ENCODE measurements at regions of chr5 and their contacts with region 1.

Region 1: GRCh38 chr5:171207256-171207847 is 101.7 kb upstream of the TLX3 start:
- DNase-seq: peak; percentile 57
- ATAC-seq: peak; percentile 79
- H3K4me3 ChIP-seq: no peak overlapping the region
- H3K27ac ChIP-seq: no peak overlapping the region
- H3K4me1 ChIP-seq: no peaks in the 10 kb centered on the region
- H3K27me3 ChIP-seq: no peaks in the 10 kb centered on the region
- CTCF ChIP-seq: peak; percentile 64
- POLR2A ChIP-seq: no peak
- RAD21 ChIP-seq: peak; percentile 65

Region 2: DNA sequence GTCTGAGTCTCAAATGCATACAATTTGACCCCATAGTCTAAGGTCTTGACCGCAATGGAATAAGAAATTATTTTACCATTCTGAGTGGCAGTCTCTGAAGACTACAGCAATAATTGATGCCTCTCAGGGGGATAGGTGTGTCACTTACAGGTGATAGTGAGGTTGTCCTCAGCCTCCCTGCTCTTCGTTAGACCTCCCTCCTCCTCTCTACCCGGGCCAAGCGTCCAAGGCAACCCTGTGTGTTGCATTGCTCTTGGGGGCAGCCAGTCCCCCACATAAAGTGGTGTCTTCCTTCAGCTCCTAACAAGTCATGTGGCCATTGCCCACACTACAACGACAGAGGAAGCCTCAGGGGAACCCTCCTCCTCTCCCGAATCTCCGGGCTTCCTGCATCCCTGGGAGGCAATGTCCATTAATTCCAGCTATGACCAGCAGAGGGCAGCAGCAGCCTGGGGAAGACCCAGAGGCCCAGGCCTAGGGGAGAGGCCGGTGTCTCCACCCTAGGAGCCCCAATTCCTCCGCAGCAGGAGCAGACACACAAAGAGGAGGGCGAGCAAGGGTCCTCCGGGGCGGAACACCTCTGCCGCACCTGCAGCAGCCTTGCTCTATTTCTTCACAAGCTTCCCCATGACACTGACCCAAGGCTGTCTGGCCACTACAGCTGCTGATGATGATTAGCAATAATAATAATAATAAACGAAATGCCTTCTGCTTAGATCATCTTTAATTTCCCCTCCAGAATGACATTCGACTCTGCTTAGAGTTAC is 568.7 kb before region 1 on chr5:
- CTCF ChIA-PET with region 1: no interaction called
- POLR2A ChIA-PET with region 1: no interaction called
- dilution Hi-C with region 1: no loop called
- in situ Hi-C with region 1: no loop called
- intact Hi-C with region 1: loop called (anchors 10 kb)
- DNase-seq: peak; percentile 28
- ATAC-seq: peak; percentile 95
- H3K4me3 ChIP-seq: no peak overlapping the region
- H3K27ac ChIP-seq: no peak overlapping the region
- H3K4me1 ChIP-seq: peaks cover 4% of the 10 kb centered on the region; the same call in 1 of the 2 replicates
- H3K27me3 ChIP-seq: no peaks in the 10 kb centered on the region; the same call in 1 of the 2 replicates
- CTCF ChIP-seq: peak; percentile 72
- POLR2A ChIP-seq: no peak
- RAD21 ChIP-seq: peak; percentile 70

Region 3: GRCh38 chr5:170747851-170748250 is 459.5 kb before region 1 on chr5:
- CTCF ChIA-PET with region 1: no interaction called
- POLR2A ChIA-PET with region 1: no interaction called
- dilution Hi-C with region 1: no loop called
- in situ Hi-C with region 1: no loop called
- intact Hi-C with region 1: loop called (anchors 2 kb)
- DNase-seq: no peak
- ATAC-seq: no peak
- H3K4me3 ChIP-seq: no peak overlapping the region
- H3K27ac ChIP-seq: no peak overlapping the region
- H3K4me1 ChIP-seq: peaks cover 2% of the 10 kb centered on the region; the same call in 1 of the 2 replicates
- H3K27me3 ChIP-seq: peaks cover 35% of the 10 kb centered on the region
- CTCF ChIP-seq: peak; percentile 34
- POLR2A ChIP-seq: no peak
- RAD21 ChIP-seq: peak; percentile 29; the same call in 1 of the 2 replicates

Region 4: DNA sequence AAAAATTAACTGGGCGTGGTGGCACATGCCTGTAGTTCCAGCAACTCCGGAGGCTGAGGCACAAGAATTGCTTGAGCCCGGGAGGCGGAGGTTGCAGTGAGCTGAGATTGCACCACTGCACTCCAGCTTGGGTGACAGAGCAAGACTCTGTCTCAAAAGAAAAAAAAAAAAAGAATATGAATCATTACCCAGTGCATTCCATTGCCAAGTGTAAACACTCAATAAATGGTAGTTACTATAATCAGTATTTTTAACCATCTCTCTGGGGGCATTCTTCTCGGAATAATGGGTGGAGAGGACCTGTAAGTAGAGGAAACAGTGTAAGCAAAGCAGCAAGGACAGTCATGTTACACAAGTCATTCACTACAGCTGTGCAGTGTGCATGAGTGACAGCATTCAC is 359.3 kb before region 1 on chr5:
- CTCF ChIA-PET with region 1: no interaction called
- POLR2A ChIA-PET with region 1: no interaction called
- dilution Hi-C with region 1: no loop called
- in situ Hi-C with region 1: no loop called
- intact Hi-C with region 1: no loop called
- DNase-seq: peak; percentile 23
- ATAC-seq: peak; percentile 76
- H3K4me3 ChIP-seq: no peak overlapping the region
- H3K27ac ChIP-seq: no peak overlapping the region
- H3K4me1 ChIP-seq: peaks cover 2% of the 10 kb centered on the region; the same call in 1 of the 2 replicates
- H3K27me3 ChIP-seq: no peaks in the 10 kb centered on the region
- CTCF ChIP-seq: no peak
- POLR2A ChIP-seq: no peak
- RAD21 ChIP-seq: no peak

Region 5: GRCh38 chr5:171272996-171273970 is 65.9 kb after region 1 on chr5:
- CTCF ChIA-PET with region 1: no interaction called
- POLR2A ChIA-PET with region 1: no interaction called
- dilution Hi-C with region 1: no loop called
- in situ Hi-C with region 1: no loop called
- intact Hi-C with region 1: loop called (anchors 5 kb)
- DNase-seq: peak; percentile 40
- ATAC-seq: peak; percentile 15; the same call in 1 of the 2 replicates
- H3K4me3 ChIP-seq: no peak overlapping the region
- H3K27ac ChIP-seq: no peak overlapping the region
- H3K4me1 ChIP-seq: peaks cover 12% of the 10 kb centered on the region
- H3K27me3 ChIP-seq: no peaks in the 10 kb centered on the region
- CTCF ChIP-seq: peak; percentile 50
- POLR2A ChIP-seq: no peak
- RAD21 ChIP-seq: peak; percentile 49

Region 6: DNA sequence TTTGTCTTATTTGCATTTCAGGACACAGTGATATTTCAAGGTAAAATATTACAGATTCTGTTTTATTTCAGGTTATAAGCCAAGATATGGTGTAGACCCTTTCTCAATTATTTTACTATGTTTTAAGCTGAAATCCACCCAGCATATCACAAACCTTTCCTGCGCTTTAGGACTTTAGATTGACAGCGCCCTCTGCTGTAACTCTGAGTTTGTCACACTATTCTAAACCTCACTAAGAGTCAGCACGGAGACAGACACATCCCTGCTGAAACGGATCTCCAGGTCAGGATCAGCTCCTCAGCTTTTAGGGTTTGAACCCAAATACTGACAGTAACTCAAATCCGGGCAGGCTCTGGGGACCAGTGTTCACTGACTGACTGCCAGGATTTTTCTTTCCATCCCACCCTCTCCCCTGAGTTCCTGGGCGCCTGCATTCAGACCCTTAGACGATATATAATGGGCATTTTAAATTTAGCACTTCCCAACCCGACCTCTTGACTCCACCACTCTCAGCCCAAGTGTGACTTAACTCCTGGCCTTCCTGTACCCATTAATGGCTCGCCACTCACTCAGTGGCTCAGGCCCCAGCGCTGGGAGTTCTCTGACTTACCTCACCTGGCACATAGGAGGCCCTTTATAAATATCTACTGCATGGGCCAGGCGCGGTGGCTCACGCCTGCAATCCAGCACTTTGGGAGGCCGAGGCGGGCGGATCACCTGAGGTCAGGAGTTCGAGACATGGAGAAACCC is 135.2 kb after region 1 on chr5:
- CTCF ChIA-PET with region 1: interaction called, 22 read pairs
- POLR2A ChIA-PET with region 1: no interaction called
- dilution Hi-C with region 1: no loop called
- in situ Hi-C with region 1: loop called (anchors 5 kb)
- intact Hi-C with region 1: loop called (anchors 1 kb)
- DNase-seq: peak; percentile 71
- ATAC-seq: peak; percentile 97
- H3K4me3 ChIP-seq: no peak overlapping the region
- H3K27ac ChIP-seq: no peak overlapping the region
- H3K4me1 ChIP-seq: no peaks in the 10 kb centered on the region
- H3K27me3 ChIP-seq: 0 out of 2 replicates have a peak, but pooled peaks cover 3% of the 10 kb centered on the region
- CTCF ChIP-seq: peak; percentile 78
- POLR2A ChIP-seq: no peak
- RAD21 ChIP-seq: peak; percentile 79